ENCODE measurements at regions of chr10 and their contacts with region 1.

Region 1: DNA sequence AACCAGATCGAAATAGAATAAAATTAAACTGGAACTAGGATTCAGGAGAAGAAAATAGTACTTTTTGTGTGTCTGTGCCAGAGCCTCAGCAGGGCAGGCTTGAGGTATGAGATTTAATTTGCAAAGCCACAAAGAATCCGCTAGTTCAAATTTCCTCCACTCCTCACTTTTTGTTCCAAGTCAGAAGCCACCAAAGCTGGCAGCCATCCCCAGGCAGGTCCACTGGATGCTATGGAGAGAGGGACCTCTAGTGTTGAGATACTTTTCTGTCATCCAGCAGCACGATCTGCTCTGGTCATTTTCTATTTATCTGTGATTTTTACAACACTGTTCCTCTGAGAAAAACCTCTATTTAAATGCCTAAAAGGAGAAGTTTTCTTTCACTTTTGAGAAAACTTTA is 147.9 kb upstream of the FRMD4A start:
- DNase-seq: peak; percentile 60 to 76 (median 73)
- ATAC-seq: peak in 3 of 4 donors; percentile 72 to 82 (median 81)
- H3K4me3 ChIP-seq: no peak overlapping the region
- H3K27ac ChIP-seq: no peak overlapping the region
- H3K4me1 ChIP-seq: peaks cover 0 to 14% (median 0%) of the 10 kb centered on the region in 12 donors
- H3K27me3 ChIP-seq: peaks cover 0 to 4% (median 0%) of the 10 kb centered on the region in 9 donors
- CTCF ChIP-seq: peak; percentile 39 to 79 (median 65)
- POLR2A ChIP-seq: no peak

Region 2: DNA sequence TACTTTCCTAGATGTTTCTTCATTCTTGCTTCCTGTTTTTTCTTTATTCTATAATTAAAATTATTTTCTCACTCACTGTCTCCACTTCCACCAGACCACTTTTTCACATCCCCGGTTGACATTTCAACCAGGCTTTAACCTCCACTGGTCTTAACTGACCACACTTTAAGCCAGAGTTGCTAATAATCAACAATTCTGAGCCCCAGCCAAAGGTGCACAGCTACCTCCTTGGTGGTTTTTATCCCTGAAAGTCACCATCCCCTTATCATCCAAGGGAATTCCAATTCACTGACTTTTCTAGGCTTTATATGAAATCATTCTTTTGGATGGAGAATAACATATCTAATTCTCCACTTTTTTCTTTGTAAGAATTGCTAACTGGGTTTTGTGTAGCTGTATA is 286.7 kb before region 1 on chr10:
- intact Hi-C with region 1: loop called in 9 of 10 experiments (anchors 1 to 5 kb)
- DNase-seq: no peak
- ATAC-seq: no peak
- H3K4me3 ChIP-seq: no peak overlapping the region
- H3K27ac ChIP-seq: no peak overlapping the region
- H3K4me1 ChIP-seq: no peaks in the 10 kb centered on the region
- H3K27me3 ChIP-seq: peaks cover 0 to 23% (median 3%) of the 10 kb centered on the region in 9 donors
- CTCF ChIP-seq: no peak
- POLR2A ChIP-seq: no peak

Region 3: GRCh38 chr10:14200698-14201544 is 277.7 kb before region 1 on chr10:
- intact Hi-C with region 1: loop called in 9 of 10 experiments (anchors 1 to 5 kb)
- DNase-seq: no peak
- ATAC-seq: no peak
- H3K4me3 ChIP-seq: no peak overlapping the region
- H3K27ac ChIP-seq: no peak overlapping the region
- H3K4me1 ChIP-seq: no peaks in the 10 kb centered on the region
- H3K27me3 ChIP-seq: peaks cover 0 to 68% (median 3%) of the 10 kb centered on the region in 9 donors
- CTCF ChIP-seq: peak in 4 of 12 donors; percentile 11 to 27 (median 18)
- POLR2A ChIP-seq: no peak

Region 4: GRCh38 chr10:14385596-14386593 is 92.7 kb before region 1 on chr10:
- intact Hi-C with region 1: loop called in 2 of 10 experiments (anchors 10 kb)
- DNase-seq: no peak
- ATAC-seq: peak in 1 of 4 donors; percentile 29
- H3K4me3 ChIP-seq: no peak overlapping the region
- H3K27ac ChIP-seq: no peak overlapping the region
- H3K4me1 ChIP-seq: no peaks in the 10 kb centered on the region
- H3K27me3 ChIP-seq: peaks cover 0 to 7% (median 0%) of the 10 kb centered on the region in 9 donors
- CTCF ChIP-seq: peak in 2 of 12 donors; percentile 6 to 16
- POLR2A ChIP-seq: no peak